A549 (cell line): ENCODE measurements at regions of chr2 and their contacts with region 1.

Region 1: DNA sequence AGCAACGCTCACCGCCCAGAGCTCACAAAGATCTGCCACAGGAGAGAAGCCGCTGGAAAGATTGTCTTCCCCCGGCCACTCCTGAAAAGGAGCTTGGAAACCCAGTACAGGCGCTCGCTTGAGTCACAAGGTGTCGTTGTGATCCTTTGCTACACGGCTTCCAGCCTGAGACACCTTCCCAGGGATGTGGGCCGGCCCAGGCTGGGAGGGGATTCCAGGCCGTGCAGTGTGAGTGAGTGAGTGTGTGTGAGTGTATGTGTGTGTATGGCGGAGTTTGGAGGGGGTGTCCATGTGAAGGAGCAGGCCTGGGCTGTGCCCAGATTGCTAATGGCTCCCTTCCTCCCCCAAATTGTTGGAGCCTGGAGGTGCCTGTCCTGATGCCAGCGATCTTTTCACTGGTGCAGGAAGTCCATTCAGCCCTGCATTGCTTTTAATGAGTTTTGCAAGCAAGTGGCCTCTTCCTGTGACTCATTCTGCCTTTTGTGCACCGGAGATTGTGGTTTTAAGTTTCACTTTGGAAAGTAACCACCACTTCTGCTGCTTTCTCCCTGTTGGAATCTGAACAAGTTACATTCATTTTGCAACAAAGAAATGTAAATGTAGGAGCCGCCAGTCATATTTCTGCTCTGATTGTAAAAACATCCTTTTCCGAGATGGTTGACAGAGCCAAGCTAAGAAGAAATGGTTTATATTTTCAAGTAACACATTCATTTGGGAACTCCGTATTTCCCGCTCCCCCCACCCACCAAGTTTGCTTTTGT is 83.7 kb downstream of the LPIN1 start:
- DNase-seq: peak; percentile 79 to 89
- ATAC-seq: peak; percentile 95 to 96
- H3K4me3 ChIP-seq: peak overlapping the region; percentile 13
- H3K27ac ChIP-seq: peak overlapping the region; percentile 65 to 77
- H3K4me1 ChIP-seq: peaks cover 16% of the 10 kb centered on the region
- CTCF ChIP-seq: peak; percentile 69
- EP300 ChIP-seq: no peak; a peak in 1 of 5 replicates
- POLR2A ChIP-seq: 0 out of 2 replicates have a peak, but pooled peaks have one; percentile 14
- RAD21 ChIP-seq: peak; percentile 85 to 86

Region 2: DNA sequence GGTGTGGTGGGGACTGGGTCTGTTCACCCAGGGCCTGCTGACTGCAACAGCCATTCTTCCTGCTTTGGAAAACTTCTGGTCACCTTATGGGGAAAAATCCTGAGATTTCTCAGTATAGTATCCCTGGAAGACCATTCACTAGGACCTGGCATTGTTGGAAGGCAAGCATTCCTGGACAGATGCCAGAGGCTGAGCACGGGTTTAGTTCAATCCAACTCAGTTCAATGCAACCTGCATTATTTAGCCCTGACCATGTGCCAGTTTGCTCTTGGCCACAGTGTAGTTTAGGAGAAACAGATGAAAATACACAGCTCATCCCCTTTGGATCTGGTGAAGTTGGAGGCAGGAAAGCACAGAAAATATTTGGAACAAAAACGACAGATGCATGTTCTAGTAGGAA is 12.2 kb after region 1 on chr2:
- CTCF ChIA-PET with region 1: interaction called, 10 read pairs
- POLR2A ChIA-PET with region 1: no interaction called
- DNase-seq: no peak
- ATAC-seq: no peak
- H3K4me3 ChIP-seq: no peak overlapping the region
- H3K27ac ChIP-seq: no peak overlapping the region
- H3K4me1 ChIP-seq: no peaks in the 10 kb centered on the region
- CTCF ChIP-seq: no peak
- EP300 ChIP-seq: no peak
- POLR2A ChIP-seq: no peak
- RAD21 ChIP-seq: no peak

Region 3: GRCh38 chr2:12716282-12717190 is 886.4 kb after region 1 on chr2 and contains the start of gene TRIB2:
- CTCF ChIA-PET with region 1: interaction called, 10 read pairs
- POLR2A ChIA-PET with region 1: interaction called, 5 read pairs
- DNase-seq: peak; percentile 41 to 63
- ATAC-seq: peak; percentile 71 to 81
- H3K4me3 ChIP-seq: peak within 1 kb of the TSS; percentile 64
- H3K27ac ChIP-seq: peak within 1 kb of the TSS in 1 of 2 experiments; percentile 69; a peak in 4 of 6 replicates
- H3K4me1 ChIP-seq: peaks cover 15% of the 10 kb centered on the region
- CTCF ChIP-seq: no peak
- EP300 ChIP-seq: no peak
- POLR2A ChIP-seq: no peak
- RAD21 ChIP-seq: no peak
- polyA plus RNA-seq, gene TRIB2: 0.17 and 0.28 TPM in 2 replicates

Region 4: GRCh38 chr2:12931186-12931844 is 1101.2 kb after region 1 on chr2:
- CTCF ChIA-PET with region 1: interaction called, 21 read pairs
- POLR2A ChIA-PET with region 1: no interaction called
- DNase-seq: peak; percentile 4 to 19
- ATAC-seq: peak; percentile 47 to 83; a peak in 3 of 6 replicates
- H3K4me3 ChIP-seq: no peak overlapping the region
- H3K27ac ChIP-seq: no peak overlapping the region
- H3K4me1 ChIP-seq: no peaks in the 10 kb centered on the region
- CTCF ChIP-seq: peak; percentile 43
- EP300 ChIP-seq: no peak
- POLR2A ChIP-seq: no peak
- RAD21 ChIP-seq: peak; percentile 46 to 51